Activated naive CD4-positive, alpha-beta T cell treated with anti-CD3 and anti-CD28 coated beads, Interleukin-2, amount 10 ng/mL, durations not matched to agents 7 days and 5 days (primary cell): ENCODE measurements at regions of chr17 and their contacts with region 1.

Region 1: DNA sequence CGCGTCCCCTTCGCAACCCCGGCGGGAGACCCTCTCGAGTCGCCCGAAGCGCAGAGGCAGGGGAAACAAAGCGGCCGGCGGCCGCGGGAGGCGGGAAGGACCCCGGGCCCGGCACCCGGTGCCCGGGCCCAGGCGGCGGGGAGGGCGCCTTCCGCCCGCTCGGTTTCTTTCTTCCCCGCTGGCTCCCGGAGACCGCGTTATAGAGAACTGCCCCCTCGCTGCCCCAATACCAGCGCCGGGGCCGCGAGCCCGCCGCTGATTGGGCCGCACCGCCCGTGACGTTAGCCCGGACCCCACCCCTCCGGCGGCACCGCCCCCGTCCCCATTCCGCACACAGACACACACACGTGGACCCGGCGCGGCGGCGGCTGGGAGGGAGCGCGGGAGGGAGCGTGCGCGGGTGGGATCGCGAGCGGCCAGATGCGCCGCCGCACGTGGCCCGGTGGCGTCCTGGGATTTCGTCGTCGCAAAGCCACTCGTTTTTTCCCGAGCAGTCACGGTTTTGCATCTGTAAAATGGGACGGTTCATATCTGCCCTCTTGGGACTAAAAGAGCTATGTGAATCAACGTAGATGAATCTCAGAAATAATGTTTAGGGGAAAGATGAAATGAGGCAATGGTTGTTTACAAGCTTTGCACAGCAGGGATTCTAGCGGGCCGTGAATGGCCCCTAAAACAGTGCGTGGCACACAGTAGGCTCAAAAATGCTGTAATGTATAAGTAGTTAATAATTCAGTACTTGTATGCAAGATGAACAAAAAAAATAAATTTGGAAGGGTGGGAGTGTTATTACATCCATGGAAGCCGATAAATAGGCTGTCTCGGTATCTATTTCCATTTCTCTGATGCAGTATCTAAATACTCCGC is at the start of gene EPOP:
- DNase-seq: peak; percentile 93
- H3K4me3 Mint-ChIP-seq: peak within 1 kb of the TSS; percentile 63
- H3K27ac Mint-ChIP-seq: no peak within 1 kb of the TSS
- H3K4me1 Mint-ChIP-seq: peaks cover 49% of the 10 kb centered on the region
- H3K27me3 Mint-ChIP-seq: peaks cover 41% of the 10 kb centered on the region

Region 2: DNA sequence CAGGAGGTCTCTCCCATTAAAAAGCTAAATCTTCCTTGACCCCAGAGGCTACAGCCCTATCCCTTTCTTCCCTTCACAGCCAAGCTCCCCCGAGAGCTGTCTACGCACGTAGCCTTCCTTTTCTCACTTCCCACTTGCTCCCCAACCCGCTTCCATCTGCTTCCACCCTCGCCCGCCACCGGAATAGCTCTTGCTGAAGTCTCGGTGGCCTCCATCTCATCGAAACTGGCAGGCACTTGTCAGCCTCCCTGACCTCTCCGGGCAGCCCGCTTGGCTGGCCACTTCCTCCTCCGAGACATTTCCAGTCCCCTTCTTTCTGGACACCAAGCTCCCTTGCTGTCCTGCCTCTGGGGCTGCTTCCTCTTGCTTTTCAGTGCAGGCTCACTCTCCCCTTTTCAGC is 10.5 kb after region 1 on chr17:
- CTCF ChIA-PET with region 1: interaction called, 22 read pairs
- DNase-seq: no peak
- H3K4me3 Mint-ChIP-seq: no peak overlapping the region
- H3K27ac Mint-ChIP-seq: no peak overlapping the region
- H3K4me1 Mint-ChIP-seq: no peaks in the 10 kb centered on the region
- H3K27me3 Mint-ChIP-seq: peaks cover 33% of the 10 kb centered on the region

Region 3: DNA sequence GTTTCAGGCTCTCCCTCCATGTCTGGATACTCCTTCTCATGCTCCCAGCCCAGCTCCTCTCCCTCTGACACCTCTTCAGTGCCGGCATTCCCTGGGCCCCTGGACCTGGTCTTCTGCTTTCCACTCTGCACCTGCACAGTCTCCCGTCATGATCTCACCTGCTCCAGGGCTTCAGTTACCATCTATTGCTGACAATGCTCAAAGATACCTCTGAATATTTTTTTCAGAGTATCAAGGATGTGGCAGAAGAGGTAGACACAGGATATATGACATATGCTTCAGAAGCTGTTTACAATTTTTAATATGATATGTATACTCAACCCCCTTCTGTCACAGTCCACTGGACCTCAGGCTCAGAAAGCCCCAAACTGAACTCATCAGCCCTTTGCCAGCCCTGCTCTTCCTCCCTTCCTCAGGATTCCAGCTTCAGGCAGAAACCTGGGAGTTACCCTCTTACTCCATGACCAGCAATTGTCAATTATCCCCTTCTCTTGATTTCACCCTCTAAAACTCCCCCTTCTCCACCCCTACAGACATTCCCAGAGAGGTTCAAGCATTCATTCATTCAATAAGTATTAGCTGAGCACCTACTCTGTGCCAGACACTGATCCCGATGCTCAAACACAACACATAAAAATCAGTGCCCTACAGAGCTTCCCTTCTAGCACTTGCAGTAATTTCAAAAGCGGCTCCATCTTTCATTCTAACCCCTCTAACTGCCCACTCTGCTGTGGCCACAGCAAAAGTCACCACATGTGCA is 22.3 kb after region 1 on chr17:
- CTCF ChIA-PET with region 1: interaction called, 18 read pairs
- DNase-seq: no peak
- H3K4me3 Mint-ChIP-seq: no peak overlapping the region
- H3K27ac Mint-ChIP-seq: peak overlapping the region; percentile 60
- H3K4me1 Mint-ChIP-seq: peaks cover 39% of the 10 kb centered on the region
- H3K27me3 Mint-ChIP-seq: peaks cover 26% of the 10 kb centered on the region

Region 4: GRCh38 chr17:38729886-38730525 is 55.0 kb after region 1 on chr17 and contains the start of gene CISD3:
- CTCF ChIA-PET with region 1: interaction called, 116 read pairs
- DNase-seq: peak; percentile 89
- H3K4me3 Mint-ChIP-seq: peak within 1 kb of the TSS; percentile 100
- H3K27ac Mint-ChIP-seq: peak within 1 kb of the TSS; percentile 94
- H3K4me1 Mint-ChIP-seq: peaks cover 82% of the 10 kb centered on the region
- H3K27me3 Mint-ChIP-seq: no peaks in the 10 kb centered on the region

Region 5: GRCh38 chr17:38868817-38869525 is 194.0 kb after region 1 on chr17:
- CTCF ChIA-PET with region 1: no interaction called
- DNase-seq: peak; percentile 88
- H3K4me3 Mint-ChIP-seq: peak overlapping the region; percentile 98
- H3K27ac Mint-ChIP-seq: peak overlapping the region; percentile 99
- H3K4me1 Mint-ChIP-seq: peaks cover 51% of the 10 kb centered on the region
- H3K27me3 Mint-ChIP-seq: peaks cover 16% of the 10 kb centered on the region